T-cell (primary cell): ENCODE measurements at regions of chr12 and their contacts with region 1.

Region 1: DNA sequence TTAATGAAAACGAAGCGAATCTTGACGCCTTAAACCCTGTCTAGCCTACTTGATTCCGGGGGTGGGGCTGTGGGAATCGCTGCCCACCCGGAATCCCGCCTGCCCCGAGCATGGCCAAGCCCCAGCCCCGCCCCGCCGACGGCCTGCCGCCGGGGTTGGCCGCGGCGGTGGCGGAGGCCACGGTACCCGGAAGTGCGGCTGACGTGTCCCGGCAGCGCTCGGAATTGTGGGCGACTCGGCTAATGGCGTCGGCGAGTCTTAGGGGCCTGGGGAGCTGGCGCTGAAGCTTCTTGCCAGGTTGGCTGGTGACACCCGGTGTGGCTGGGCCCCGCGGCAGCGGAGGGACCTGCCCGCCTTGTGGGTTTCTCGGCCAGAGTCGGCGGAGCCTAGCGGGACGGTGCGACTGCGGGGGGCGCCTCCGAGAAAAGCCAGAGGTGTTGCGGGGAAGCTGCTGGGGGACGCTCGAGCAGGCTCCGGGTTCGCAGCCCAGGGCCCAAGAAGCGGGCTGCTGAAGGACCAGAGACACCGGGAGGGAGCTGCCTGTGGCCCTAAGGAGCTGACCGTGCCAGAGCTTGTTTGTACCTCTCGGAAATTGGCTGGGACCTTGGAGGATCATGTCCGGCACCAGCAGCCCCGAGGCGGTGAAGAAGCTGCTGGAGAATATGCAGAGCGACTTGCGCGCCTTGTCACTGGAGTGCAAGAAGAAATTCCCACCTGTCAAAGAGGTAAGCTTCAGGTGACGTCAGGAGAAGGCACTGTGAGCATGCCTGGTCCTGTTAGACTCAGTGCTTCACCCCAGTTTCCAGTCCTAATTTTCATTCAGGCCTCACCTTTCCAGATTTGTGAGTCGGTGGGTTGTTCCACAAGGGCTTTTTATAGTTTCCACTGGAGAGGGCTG is at the start of gene MON2:
- DNase-seq: peak; percentile 68 to 91 (median 81)
- ATAC-seq: peak; percentile 97 to 99 (median 98)
- H3K4me3 ChIP-seq: peak within 1 kb of the TSS; percentile 84 to 99
- H3K4me3 Mint-ChIP-seq: peak within 1 kb of the TSS; percentile 84 to 93 (median 90)
- H3K27ac ChIP-seq: peak within 1 kb of the TSS; percentile 91
- H3K27ac Mint-ChIP-seq: peak within 1 kb of the TSS; percentile 92 to 93
- H3K4me1 ChIP-seq: peaks cover 9 to 12% of the 10 kb centered on the region in 2 experiments
- H3K4me1 Mint-ChIP-seq: peaks cover 14 to 29% (median 25%) of the 10 kb centered on the region in 3 donors
- H3K27me3 ChIP-seq: no peaks in the 10 kb centered on the region
- H3K27me3 Mint-ChIP-seq: no peaks in the 10 kb centered on the region
- total RNA-seq, gene MON2: 61.2 to 73.2 (median 66.5) TPM

Region 2: GRCh38 chr12:62552906-62553556 is 86.2 kb after region 1 on chr12:
- CTCF ChIA-PET with region 1: no interaction called
- POLR2A ChIA-PET with region 1: interaction called in 1 of 2 experiments, 10 read pairs
- DNase-seq: no peak
- ATAC-seq: no peak
- H3K4me3 ChIP-seq: no peak overlapping the region
- H3K4me3 Mint-ChIP-seq: no peak overlapping the region
- H3K27ac ChIP-seq: no peak overlapping the region
- H3K27ac Mint-ChIP-seq: no peak overlapping the region
- H3K4me1 ChIP-seq: no peaks in the 10 kb centered on the region
- H3K4me1 Mint-ChIP-seq: no peaks in the 10 kb centered on the region
- H3K27me3 ChIP-seq: no peaks in the 10 kb centered on the region
- H3K27me3 Mint-ChIP-seq: no peaks in the 10 kb centered on the region

Region 3: GRCh38 chr12:62603061-62603810 is 136.4 kb after region 1 on chr12:
- CTCF ChIA-PET with region 1: interaction called in 1 of 2 experiments, 6 read pairs
- POLR2A ChIA-PET with region 1: interaction called in 1 of 2 experiments, 13 read pairs
- DNase-seq: peak; percentile 64 to 89 (median 76)
- ATAC-seq: peak; percentile 67 to 83 (median 80)
- H3K4me3 ChIP-seq: peak overlapping the region; percentile 84 to 94
- H3K4me3 Mint-ChIP-seq: peak overlapping the region; percentile 80 to 97 (median 90)
- H3K27ac ChIP-seq: peak overlapping the region; percentile 100
- H3K27ac Mint-ChIP-seq: peak overlapping the region; percentile 98
- H3K4me1 ChIP-seq: peaks cover 4 to 11% of the 10 kb centered on the region in 2 experiments
- H3K4me1 Mint-ChIP-seq: peaks cover 33 to 40% (median 38%) of the 10 kb centered on the region in 3 donors
- H3K27me3 ChIP-seq: no peaks in the 10 kb centered on the region
- H3K27me3 Mint-ChIP-seq: no peaks in the 10 kb centered on the region